Astrocyte of the cerebellum (primary cell): ENCODE measurements at regions of chr12 and their contacts with region 1.

Region 1: DNA sequence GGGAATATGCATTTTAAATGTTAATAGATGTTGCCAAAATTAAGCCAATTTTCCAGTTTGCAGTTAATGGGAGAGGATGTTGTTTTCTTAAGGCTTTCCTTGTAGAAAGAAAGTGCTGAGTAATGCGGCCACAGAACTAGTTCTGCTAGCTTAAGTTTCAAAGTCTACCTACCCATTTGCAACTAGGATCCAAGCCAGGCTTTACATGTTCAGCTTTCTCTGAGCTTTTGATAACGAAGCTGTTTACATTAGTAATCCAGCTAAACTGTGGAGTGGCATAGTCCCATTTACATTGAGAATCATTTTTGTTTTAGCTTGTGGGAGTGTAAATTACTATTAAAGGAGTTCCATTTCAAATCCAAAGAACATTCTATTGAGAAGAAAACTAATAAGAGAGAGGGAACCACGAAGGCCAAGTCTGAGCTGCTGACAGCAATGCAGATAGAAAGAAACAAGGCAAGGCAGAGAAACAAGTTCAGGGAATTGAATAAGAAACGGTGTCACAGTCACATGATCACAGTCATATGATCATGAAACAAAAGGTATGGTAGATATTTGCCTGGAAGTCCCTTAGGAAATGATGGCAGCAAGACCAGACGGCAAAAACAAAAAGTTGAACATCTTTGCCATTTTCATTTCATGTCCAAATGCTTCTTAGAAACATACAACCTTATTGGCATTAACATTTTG is 274.9 kb downstream of the PAWR start:
- DNase-seq: no peak
- H3K4me3 ChIP-seq: no peak overlapping the region
- CTCF ChIP-seq: no peak

Region 2: DNA sequence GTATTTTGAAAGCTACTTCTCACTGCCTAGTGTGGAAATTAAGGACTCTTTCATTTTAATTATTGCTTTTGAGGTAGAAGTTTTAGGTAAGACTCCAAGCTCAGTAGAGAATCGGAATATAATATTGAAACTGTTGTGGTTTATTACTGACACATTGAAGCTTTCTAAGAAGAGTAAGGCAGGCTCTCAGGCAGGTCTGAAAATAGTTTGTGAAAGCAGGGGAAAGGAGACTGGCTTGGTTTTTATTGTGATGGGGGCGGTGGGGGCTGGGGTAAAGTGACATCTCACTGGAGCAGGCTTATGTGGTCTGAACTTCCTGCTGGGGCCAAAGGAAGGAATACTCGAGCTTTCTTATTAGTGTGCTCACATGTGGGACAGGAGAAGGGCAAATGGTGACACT is 763.0 kb after region 1 on chr12:
- in situ Hi-C with region 1: loop called (anchors 5 kb)
- DNase-seq: no peak
- H3K4me3 ChIP-seq: no peak overlapping the region
- CTCF ChIP-seq: no peak